ENCODE measurements at regions of chr1 and their contacts with region 1.

Region 1: DNA sequence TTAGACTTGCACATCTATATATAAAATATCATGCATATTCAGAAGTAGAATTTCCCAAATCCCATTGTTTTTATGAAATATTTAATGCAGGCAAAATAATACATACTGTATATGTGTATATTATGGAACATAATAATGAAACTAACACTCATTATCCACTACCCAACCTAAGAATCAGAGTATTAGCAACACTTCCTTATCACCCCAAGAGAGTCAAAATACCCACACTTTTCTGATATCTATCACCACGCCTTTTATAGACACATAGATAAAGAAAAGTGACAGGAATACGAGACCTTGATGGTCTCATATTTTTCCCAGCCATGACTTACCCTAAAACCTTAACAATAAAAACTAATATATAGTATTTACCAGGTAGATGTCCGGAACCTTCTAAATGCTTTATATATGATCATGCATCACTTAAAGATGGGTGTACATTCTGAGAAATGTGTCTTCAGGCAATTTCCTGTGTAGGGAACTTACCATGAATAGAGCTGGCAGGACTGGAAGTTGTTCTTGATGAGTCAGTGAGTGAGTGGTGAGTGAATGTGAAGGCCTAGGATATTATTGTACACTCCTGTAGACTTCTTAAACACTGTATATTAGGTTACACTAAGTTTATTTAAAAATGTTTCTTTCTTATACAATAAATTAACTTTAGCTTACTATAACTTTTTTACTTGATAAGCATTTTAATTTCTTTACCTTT is 45.5 kb downstream of the TNFSF4 start:
- DNase-seq: peak; percentile 87
- H3K4me3 ChIP-seq: no peak overlapping the region
- H3K27ac ChIP-seq: peak overlapping the region; percentile 37
- H3K4me1 ChIP-seq: peaks cover 17% of the 10 kb centered on the region
- H3K27me3 ChIP-seq: no peaks in the 10 kb centered on the region
- CTCF ChIP-seq: no peak

Region 2: GRCh38 chr1:174068000-174068399 is 906.3 kb after region 1 on chr1:
- CTCF ChIA-PET with region 1: interaction called, 11 read pairs
- dilution Hi-C with region 1: no loop called
- in situ Hi-C with region 1: no loop called
- intact Hi-C with region 1: no loop called
- DNase-seq: peak; percentile 73
- H3K4me3 ChIP-seq: no peak overlapping the region
- H3K27ac ChIP-seq: no peak overlapping the region
- H3K4me1 ChIP-seq: peaks cover 8% of the 10 kb centered on the region
- H3K27me3 ChIP-seq: no peaks in the 10 kb centered on the region
- CTCF ChIP-seq: no peak